ENCODE measurements at regions of chr10 and their contacts with region 1.

Region 1: GRCh38 chr10:91908337-91909116 is 759 bp downstream of the FGFBP3 start:
- DNase-seq: peak; percentile 77
- H3K4me3 Mint-ChIP-seq: peak overlapping the region; percentile 90
- H3K27ac Mint-ChIP-seq: peak overlapping the region; percentile 74
- H3K4me1 Mint-ChIP-seq: peaks cover 20% of the 10 kb centered on the region
- H3K27me3 Mint-ChIP-seq: peaks cover 7% of the 10 kb centered on the region

Region 2: GRCh38 chr10:91409869-91410637 is 498.5 kb before region 1 on chr10 and contains the start of gene HECTD2:
- CTCF ChIA-PET with region 1: no interaction called
- intact Hi-C with region 1: loop called (anchors 2 kb)
- DNase-seq: peak; percentile 77
- H3K4me3 Mint-ChIP-seq: peak within 1 kb of the TSS; percentile 83
- H3K27ac Mint-ChIP-seq: peak within 1 kb of the TSS; percentile 88
- H3K4me1 Mint-ChIP-seq: peaks cover 15% of the 10 kb centered on the region
- H3K27me3 Mint-ChIP-seq: peaks cover 12% of the 10 kb centered on the region
- total RNA-seq, gene HECTD2: 2.3 to 3.1 TPM

Region 3: DNA sequence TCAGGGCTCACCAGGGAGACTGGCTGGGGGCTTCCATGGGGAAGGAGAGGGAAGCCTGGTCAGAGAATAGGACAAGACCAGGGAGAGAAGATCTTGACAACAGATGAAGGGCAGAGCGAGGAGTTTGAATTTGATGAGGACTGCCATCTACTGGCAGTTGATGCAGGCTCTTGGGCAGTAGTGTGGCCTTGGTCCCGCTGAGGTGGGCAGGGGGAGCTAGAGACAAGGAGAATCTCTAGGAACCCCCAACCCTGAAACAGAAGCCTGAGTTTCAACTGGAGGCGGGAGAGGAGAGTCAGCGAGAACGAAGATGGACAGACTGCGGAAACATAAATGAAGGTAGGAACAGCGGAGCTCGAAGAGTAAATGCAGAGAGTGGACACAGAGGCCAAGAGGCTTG is 356.7 kb before region 1 on chr10:
- CTCF ChIA-PET with region 1: interaction called, 4 read pairs
- intact Hi-C with region 1: loop called (anchors 2 kb)
- DNase-seq: peak; percentile 26
- H3K4me3 Mint-ChIP-seq: no peak overlapping the region
- H3K27ac Mint-ChIP-seq: no peak overlapping the region
- H3K4me1 Mint-ChIP-seq: no peaks in the 10 kb centered on the region
- H3K27me3 Mint-ChIP-seq: no peaks in the 10 kb centered on the region

Region 4: DNA sequence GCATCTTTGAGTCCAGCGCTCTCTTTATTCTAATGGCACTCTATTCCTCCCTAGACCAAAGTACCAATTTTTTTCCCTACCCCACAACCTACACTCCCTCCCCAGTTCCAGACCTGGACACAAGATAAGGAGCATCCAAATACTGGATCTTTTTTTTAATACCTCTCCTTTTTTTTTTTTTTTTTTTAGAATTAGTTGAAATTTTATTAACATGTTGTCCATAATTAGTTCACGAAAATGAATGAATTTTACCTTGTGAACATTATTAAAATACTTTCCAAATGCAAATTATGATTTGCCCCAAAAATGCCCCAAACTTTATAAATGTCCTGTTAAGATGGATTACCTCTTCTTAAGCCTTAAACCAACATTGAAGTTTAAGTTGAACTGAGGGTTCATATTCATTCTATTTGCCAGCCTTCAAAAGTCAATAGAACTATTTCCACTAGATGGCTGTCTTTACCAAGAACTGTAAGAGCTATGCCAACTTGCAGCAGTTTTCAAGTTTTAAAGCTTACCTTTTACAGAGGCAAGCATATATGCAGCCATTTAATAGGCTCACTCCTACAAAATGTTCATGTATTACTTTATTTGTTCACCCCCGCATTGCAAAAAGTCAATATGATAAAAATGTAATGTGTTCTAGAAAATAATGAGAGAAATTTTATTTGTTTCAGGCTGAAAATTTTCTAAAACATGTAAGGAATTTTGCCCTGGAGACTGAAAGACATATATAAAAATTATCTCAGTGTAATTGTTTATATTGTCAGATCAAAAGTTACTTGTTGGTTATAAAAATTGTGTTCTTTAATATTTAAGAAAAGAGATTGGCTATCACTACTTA is 150.0 kb before region 1 on chr10:
- CTCF ChIA-PET with region 1: interaction called, 31 read pairs
- intact Hi-C with region 1: loop called (anchors 1 kb)
- DNase-seq: no peak
- H3K4me3 Mint-ChIP-seq: no peak overlapping the region
- H3K27ac Mint-ChIP-seq: no peak overlapping the region
- H3K4me1 Mint-ChIP-seq: peaks cover 6% of the 10 kb centered on the region
- H3K27me3 Mint-ChIP-seq: peaks cover 16% of the 10 kb centered on the region

Region 5: DNA sequence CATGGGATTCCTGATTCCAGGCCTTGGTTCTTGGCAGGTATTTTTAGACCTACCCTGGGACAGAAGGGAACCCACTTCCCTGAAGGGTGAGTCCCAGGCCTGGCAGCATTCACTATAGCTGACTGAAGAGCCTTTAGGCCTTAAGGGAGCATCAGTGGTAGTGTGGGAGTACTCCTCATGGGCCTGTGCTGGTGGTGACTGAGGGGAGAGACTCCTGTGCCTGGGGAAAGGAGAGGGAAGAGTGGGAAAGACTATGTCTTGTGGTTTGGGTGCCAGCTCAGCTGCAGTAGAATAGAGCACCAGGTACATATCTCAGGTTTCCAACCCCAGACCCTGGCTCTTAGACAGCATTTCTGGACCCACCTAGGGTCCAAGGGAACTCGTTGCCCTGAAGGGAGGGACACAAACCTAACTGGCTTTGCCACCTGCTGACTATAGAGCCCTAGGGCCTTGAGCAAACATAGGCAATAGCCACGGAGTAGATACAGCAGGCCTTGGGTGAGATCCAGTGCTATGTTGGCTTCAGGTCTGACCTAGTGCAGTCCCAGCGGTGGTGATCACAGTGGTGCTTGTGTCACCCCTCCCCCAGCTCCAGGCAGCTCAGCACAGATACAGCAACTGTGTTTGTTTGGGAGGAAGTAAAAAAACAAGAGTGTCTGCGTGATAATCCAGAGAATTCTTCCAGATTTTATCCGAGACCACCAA is 120.2 kb before region 1 on chr10:
- CTCF ChIA-PET with region 1: no interaction called
- intact Hi-C with region 1: no loop called
- DNase-seq: no peak
- H3K4me3 Mint-ChIP-seq: no peak overlapping the region
- H3K27ac Mint-ChIP-seq: no peak overlapping the region
- H3K4me1 Mint-ChIP-seq: no peaks in the 10 kb centered on the region
- H3K27me3 Mint-ChIP-seq: peaks cover 2% of the 10 kb centered on the region

Region 6: DNA sequence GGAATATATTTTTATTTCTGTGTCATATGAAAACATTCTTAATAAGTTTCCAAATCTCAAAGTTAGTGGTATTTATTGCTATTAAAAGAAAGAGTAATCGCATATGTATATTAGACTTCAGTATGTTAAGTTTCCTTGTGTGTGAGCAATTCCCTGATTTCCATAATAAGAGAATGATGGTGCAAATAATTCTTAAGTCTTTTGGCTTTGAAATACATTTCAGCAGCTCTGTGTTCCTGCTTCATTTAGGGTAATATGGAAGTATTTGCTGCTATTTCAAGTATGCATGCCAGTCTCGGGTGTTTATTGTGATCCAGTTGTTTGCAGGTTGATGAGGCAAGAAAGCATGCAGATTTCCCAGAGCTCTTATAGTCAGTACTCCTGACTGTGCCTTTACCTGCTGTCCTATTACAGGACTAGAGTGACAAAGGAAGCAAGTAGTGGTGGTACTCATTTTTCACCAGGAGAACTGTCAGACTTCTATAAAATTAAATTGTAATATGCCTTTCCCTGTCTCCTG is 42.9 kb before region 1 on chr10:
- CTCF ChIA-PET with region 1: interaction called, 4 read pairs
- intact Hi-C with region 1: loop called (anchors 2 kb)
- DNase-seq: no peak
- H3K4me3 Mint-ChIP-seq: no peak overlapping the region
- H3K27ac Mint-ChIP-seq: no peak overlapping the region
- H3K4me1 Mint-ChIP-seq: no peaks in the 10 kb centered on the region
- H3K27me3 Mint-ChIP-seq: no peaks in the 10 kb centered on the region

Region 7: GRCh38 chr10:91944880-91945630 is 36.5 kb after region 1 on chr10:
- CTCF ChIA-PET with region 1: no interaction called
- intact Hi-C with region 1: loop called (anchors 2 kb)
- DNase-seq: peak; percentile 34
- H3K4me3 Mint-ChIP-seq: no peak overlapping the region
- H3K27ac Mint-ChIP-seq: no peak overlapping the region
- H3K4me1 Mint-ChIP-seq: peaks cover 18% of the 10 kb centered on the region
- H3K27me3 Mint-ChIP-seq: no peaks in the 10 kb centered on the region

Measured in activated naive CD4-positive, alpha-beta T cell treated with anti-CD3 and anti-CD28 coated beads for 36 hours (primary cell).